Mammary epithelial cell (primary cell): ENCODE measurements at regions of chr3 and their contacts with region 1.

Region 1: GRCh38 chr3:130316169-130316568 is 29.3 kb upstream of the COL6A5 start:
- DNase-seq: no peak
- H3K4me3 ChIP-seq: no peak overlapping the region
- H3K27ac ChIP-seq: no peak overlapping the region
- H3K4me1 ChIP-seq: no peaks in the 10 kb centered on the region
- H3K27me3 ChIP-seq: peaks cover 2% of the 10 kb centered on the region
- CTCF ChIP-seq: no peak

Region 2: GRCh38 chr3:130345487-130346079 is 29.4 kb after region 1 on chr3 and contains the start of gene COL6A5:
- CTCF ChIA-PET with region 1: no interaction called
- dilution Hi-C with region 1: no loop called
- in situ Hi-C with region 1: no loop called
- intact Hi-C with region 1: no loop called
- DNase-seq: no peak
- H3K4me3 ChIP-seq: no peak within 1 kb of the TSS
- H3K27ac ChIP-seq: no peak within 1 kb of the TSS
- H3K4me1 ChIP-seq: no peaks in the 10 kb centered on the region
- H3K27me3 ChIP-seq: peaks cover 8% of the 10 kb centered on the region
- CTCF ChIP-seq: no peak
- total RNA-seq, gene COL6A5: not detected

Region 3: GRCh38 chr3:130374030-130374429 is 57.9 kb after region 1 on chr3:
- CTCF ChIA-PET with region 1: no interaction called
- dilution Hi-C with region 1: loop called (anchors 5 kb)
- in situ Hi-C with region 1: no loop called
- intact Hi-C with region 1: no loop called
- DNase-seq: no peak
- H3K4me3 ChIP-seq: no peak overlapping the region
- H3K27ac ChIP-seq: no peak overlapping the region
- H3K4me1 ChIP-seq: no peaks in the 10 kb centered on the region
- H3K27me3 ChIP-seq: no peaks in the 10 kb centered on the region
- CTCF ChIP-seq: no peak